ENCODE measurements at regions of chr12 and their contacts with region 1.

Region 1: DNA sequence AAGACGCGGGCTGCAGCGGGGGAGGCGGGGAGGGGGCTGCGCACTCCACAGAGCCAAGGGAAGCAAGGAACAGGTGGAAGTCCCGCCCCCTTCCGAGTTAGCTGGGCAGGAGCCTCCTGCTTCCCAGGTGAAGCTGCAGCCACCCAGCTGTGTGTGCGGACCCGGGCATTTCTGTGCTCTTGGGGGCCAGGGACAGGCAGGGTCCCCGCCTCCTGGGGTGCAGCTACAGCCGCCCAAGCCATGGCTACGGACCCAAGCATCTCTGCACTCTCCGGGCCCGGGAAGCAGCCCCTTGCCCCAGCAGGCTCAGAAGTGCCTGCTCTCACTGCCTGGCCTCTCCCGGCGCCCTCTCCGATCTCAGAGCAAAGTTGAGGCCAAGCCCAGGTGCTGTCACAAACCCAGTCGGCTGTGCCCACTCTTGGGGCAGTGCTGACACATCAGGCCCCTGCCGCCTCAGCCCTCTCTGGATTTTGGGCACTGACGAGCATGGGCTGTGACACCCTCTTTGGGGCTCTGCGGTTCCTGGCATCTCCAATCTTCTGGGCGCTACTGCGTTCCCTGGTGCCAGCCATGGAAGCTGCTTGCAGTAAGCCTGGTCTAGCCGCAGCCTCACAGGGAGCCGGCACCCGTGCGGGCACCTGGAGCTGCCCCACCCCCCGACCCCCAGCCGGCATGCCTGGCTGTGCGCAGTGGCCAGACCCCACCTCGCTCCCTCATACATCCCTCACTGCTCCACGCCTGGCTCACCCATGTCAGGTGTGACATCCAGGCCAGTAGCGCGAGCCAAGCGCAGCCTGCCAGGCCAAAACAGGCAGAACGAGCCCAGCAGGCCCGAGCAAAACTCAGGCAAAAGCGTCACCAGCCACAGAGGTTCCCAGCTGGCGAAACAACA is 8.5 kb upstream of the MGAT4C start:
- DNase-seq: peak; percentile 68
- ATAC-seq: peak; percentile 81
- H3K4me3 ChIP-seq: peak overlapping the region; percentile 63
- H3K27ac ChIP-seq: peak overlapping the region; percentile 39
- H3K4me1 ChIP-seq: peaks cover 13% of the 10 kb centered on the region; the same call in 1 of the 2 replicates
- H3K27me3 ChIP-seq: no peaks in the 10 kb centered on the region
- CTCF ChIP-seq: no peak

Region 2: GRCh38 chr12:86226481-86226880 is 38.2 kb before region 1 on chr12:
- CTCF ChIA-PET with region 1: no interaction called
- POLR2A ChIA-PET with region 1: no interaction called
- intact Hi-C with region 1: no loop called
- DNase-seq: no peak
- ATAC-seq: no peak
- H3K4me3 ChIP-seq: no peak overlapping the region
- H3K27ac ChIP-seq: no peak overlapping the region
- H3K4me1 ChIP-seq: no peaks in the 10 kb centered on the region
- H3K27me3 ChIP-seq: no peaks in the 10 kb centered on the region
- CTCF ChIP-seq: no peak

Region 3: GRCh38 chr12:86376052-86376451 is 111.4 kb after region 1 on chr12:
- CTCF ChIA-PET with region 1: no interaction called
- POLR2A ChIA-PET with region 1: no interaction called
- intact Hi-C with region 1: loop called (anchors 10 kb)
- DNase-seq: no peak
- ATAC-seq: no peak
- H3K4me3 ChIP-seq: no peak overlapping the region
- H3K27ac ChIP-seq: no peak overlapping the region
- H3K4me1 ChIP-seq: peaks cover 8% of the 10 kb centered on the region; the same call in 1 of the 2 replicates
- H3K27me3 ChIP-seq: no peaks in the 10 kb centered on the region
- CTCF ChIP-seq: no peak

Region 4: GRCh38 chr12:86660488-86661171 is 395.9 kb after region 1 on chr12:
- CTCF ChIA-PET with region 1: no interaction called
- POLR2A ChIA-PET with region 1: no interaction called
- intact Hi-C with region 1: loop called (anchors 10 kb)
- DNase-seq: peak; percentile 91
- ATAC-seq: peak; percentile 99
- H3K4me3 ChIP-seq: no peak overlapping the region
- H3K27ac ChIP-seq: peak overlapping the region; percentile 19
- H3K4me1 ChIP-seq: peaks cover 6% of the 10 kb centered on the region
- H3K27me3 ChIP-seq: no peaks in the 10 kb centered on the region
- CTCF ChIP-seq: no peak

Region 5: DNA sequence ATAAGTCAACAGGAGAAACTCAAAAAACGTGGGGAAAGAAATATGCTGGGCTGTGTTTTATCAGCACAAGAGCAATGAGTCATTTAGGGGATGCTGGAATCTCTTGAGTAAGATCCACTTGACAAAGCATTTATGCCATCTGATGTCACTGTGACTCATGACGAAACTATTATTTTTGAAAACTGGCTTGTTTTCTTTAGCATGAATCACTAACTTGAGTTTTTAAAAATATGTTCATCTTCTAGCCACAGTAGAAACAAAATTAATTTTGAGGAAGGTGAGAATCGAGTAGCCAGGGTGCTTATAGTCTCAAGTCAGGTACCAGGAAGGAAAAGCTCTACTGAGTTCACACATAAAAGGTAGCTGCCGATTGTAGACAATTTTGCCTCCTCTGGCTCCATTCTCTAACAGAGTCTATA is 447.7 kb after region 1 on chr12:
- CTCF ChIA-PET with region 1: no interaction called
- POLR2A ChIA-PET with region 1: no interaction called
- intact Hi-C with region 1: loop called (anchors 5 kb)
- DNase-seq: peak; percentile 98
- ATAC-seq: peak; percentile 95
- H3K4me3 ChIP-seq: peak overlapping the region; percentile 29
- H3K27ac ChIP-seq: peak overlapping the region; percentile 77
- H3K4me1 ChIP-seq: peaks cover 15% of the 10 kb centered on the region
- H3K27me3 ChIP-seq: no peaks in the 10 kb centered on the region
- CTCF ChIP-seq: no peak

Region 6: DNA sequence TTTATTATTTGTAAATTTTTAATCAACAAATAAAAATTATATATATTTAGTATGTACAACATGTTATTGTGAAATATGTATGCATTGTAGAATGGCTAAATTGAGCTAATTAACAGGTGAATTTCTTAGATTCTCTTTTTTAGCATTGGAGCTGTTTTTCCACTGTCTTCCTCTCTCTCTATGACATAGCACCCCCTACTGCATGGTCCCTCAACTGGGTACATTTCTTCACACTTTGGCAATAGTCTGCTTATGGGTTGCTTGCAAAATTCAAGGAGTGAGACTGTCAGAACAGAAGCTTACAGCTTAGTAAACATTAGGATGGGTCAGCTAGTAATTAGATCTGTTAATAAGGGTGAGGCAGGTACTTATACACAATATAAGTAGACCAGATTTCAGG is 650.0 kb after region 1 on chr12:
- CTCF ChIA-PET with region 1: no interaction called
- POLR2A ChIA-PET with region 1: no interaction called
- intact Hi-C with region 1: loop called (anchors 2 kb)
- DNase-seq: peak; percentile 61
- ATAC-seq: peak; percentile 77
- H3K4me3 ChIP-seq: no peak overlapping the region
- H3K27ac ChIP-seq: no peak overlapping the region
- H3K4me1 ChIP-seq: no peaks in the 10 kb centered on the region
- H3K27me3 ChIP-seq: no peaks in the 10 kb centered on the region
- CTCF ChIP-seq: peak; percentile 76

Measured in PC-3 (cell line).